ENCODE measurements at regions of chr6 and their contacts with region 1.

Region 1: DNA sequence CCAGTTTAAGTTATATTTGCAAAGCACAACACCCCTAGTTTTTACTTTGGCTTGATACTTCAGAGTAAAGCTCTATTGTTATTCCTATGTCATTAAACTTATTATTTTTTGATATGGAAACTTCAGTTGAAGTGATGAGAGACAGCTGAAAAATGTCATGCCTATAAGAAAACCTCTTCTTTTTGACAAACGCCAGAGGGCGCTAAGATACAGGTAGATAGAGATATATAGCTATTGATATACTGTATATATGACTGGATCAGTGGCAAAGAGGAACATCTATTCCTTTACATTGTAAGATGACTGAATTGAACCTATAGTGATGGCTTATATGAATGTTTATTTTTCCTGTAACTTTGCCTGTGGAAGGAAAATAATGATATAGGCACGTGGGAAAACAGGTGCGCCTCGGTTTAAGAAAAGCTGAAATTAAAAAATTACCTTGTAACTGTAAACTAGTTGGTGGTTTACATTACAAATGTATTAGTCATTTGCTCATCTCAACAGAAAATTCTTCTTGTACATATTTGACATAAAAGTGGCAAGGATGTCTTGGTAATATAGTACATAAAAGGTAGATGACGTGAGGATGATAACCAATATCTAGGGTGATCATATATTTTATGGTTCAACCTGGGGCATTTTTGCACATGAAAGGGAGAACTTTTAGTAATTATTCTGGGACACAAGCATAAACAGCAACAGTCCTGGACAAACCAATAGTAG is 74.1 kb downstream of the LAMA4 start:
- DNase-seq: peak; percentile 40 to 65 (median 64)
- H3K4me3 ChIP-seq: no peak overlapping the region
- H3K4me3 Mint-ChIP-seq: no peak overlapping the region
- H3K27ac ChIP-seq: no peak overlapping the region
- H3K27ac Mint-ChIP-seq: no peak overlapping the region
- H3K4me1 ChIP-seq: no peaks in the 10 kb centered on the region
- H3K4me1 Mint-ChIP-seq: no peaks in the 10 kb centered on the region
- H3K27me3 ChIP-seq: peaks cover 2% of the 10 kb centered on the region in 2 donors
- H3K27me3 Mint-ChIP-seq: peaks cover 0 to 4% (median 2%) of the 10 kb centered on the region in 3 donors
- CTCF ChIP-seq: peak; percentile 87

Region 2: GRCh38 chr6:112311950-112312547 is 131.8 kb after region 1 on chr6:
- intact Hi-C with region 1: loop called (anchors 5 to 10 kb)
- DNase-seq: no peak
- H3K4me3 ChIP-seq: no peak overlapping the region
- H3K4me3 Mint-ChIP-seq: no peak overlapping the region
- H3K27ac ChIP-seq: no peak overlapping the region
- H3K27ac Mint-ChIP-seq: no peak overlapping the region
- H3K4me1 ChIP-seq: no peaks in the 10 kb centered on the region
- H3K4me1 Mint-ChIP-seq: no peaks in the 10 kb centered on the region
- H3K27me3 ChIP-seq: no peaks in the 10 kb centered on the region
- H3K27me3 Mint-ChIP-seq: peaks cover under 1 to 4% (median 1%) of the 10 kb centered on the region in 3 donors
- CTCF ChIP-seq: peak; percentile 71

Region 3: DNA sequence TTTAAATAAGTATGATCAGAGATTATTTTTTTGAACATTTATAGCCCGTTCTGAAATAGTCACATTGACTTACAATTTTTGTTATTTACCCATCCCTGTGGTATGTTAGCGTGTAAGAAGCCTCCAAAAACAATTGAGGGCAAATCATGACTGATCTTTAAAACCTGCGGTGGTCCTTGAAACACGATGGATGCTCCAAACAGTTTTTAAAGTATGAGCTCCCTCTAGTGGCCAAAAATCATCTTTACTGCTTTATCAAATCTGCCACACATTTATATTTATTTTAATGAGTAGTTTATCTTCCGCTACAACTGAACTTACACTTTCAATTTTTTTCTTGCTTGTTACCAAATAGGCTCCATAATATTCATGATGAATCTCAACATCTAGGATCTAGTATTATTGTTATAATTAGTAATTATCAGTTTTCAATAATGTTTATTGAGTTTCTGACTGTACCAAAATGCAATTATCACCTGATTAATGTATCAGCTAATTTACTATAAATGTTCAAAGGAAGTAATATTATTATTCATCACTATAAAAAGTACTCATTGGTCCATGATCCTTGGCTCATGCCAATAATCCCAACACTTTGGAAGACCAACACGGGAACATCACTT is 1729.1 kb after region 1 on chr6:
- intact Hi-C with region 1: loop called in 1 of 2 experiments (anchors 10 kb)
- DNase-seq: peak; percentile 8 to 55 (median 41)
- H3K4me3 ChIP-seq: no peak overlapping the region
- H3K4me3 Mint-ChIP-seq: no peak overlapping the region
- H3K27ac ChIP-seq: no peak overlapping the region
- H3K27ac Mint-ChIP-seq: no peak overlapping the region
- H3K4me1 ChIP-seq: no peaks in the 10 kb centered on the region
- H3K4me1 Mint-ChIP-seq: peaks cover 2% of the 10 kb centered on the region
- H3K27me3 ChIP-seq: no peaks in the 10 kb centered on the region
- H3K27me3 Mint-ChIP-seq: peaks cover 0 to 1% (median 0%) of the 10 kb centered on the region in 3 donors
- CTCF ChIP-seq: peak; percentile 79

Region 4: DNA sequence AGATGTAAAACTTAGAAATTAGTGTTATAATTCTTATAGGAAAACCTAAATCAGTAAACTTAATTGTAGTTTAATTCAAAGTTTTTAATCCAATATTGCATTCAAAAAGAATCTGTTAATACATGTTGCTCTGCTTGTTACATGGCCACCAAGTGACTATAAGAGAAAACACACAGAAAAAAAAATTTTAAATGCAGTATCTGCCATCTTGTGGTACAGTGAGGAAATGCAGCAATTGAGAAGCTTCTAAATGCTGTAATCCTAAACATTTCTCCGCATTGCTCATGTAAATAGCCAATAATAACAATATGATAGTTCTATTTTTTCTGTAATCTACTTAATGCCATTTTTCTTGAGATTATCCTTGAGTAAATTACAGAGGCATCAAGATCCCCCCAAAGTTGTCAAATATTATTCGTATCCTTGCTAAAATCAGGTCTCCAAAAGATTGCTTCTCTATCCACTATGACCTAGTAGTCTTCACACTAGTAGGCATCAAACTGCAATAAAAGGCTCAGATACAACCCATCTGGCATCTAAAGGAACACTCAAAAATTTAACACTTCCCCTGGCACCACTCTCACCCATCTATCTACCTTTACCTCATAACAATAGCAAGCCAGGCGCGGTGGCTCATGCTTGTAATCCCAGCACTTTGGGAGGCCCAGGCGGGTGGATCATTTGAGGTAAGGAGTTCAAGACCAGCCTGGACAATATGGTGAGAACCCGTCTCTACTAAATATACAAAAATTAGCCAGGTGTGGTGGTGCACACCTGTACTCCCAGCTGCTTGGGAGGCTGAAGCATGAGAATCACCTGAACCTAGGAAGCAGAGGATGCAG is 1756.1 kb after region 1 on chr6:
- intact Hi-C with region 1: loop called in 1 of 2 experiments (anchors 10 kb)
- DNase-seq: peak; percentile 8 to 45 (median 26)
- H3K4me3 ChIP-seq: no peak overlapping the region
- H3K4me3 Mint-ChIP-seq: no peak overlapping the region
- H3K27ac ChIP-seq: no peak overlapping the region
- H3K27ac Mint-ChIP-seq: peak overlapping the region in 1 of 7 donors; percentile 25
- H3K4me1 ChIP-seq: no peaks in the 10 kb centered on the region
- H3K4me1 Mint-ChIP-seq: no peaks in the 10 kb centered on the region
- H3K27me3 ChIP-seq: no peaks in the 10 kb centered on the region
- H3K27me3 Mint-ChIP-seq: no peaks in the 10 kb centered on the region
- CTCF ChIP-seq: peak; percentile 91

Measured in CD14-positive monocyte (primary cell).